Naive thymus-derived CD4-positive, alpha-beta T cell (primary cell): ENCODE measurements at regions of chr6 and their contacts with region 1.

Region 1: GRCh38 chr6:53300656-53301551 is 47.8 kb downstream of the ELOVL5 start:
- DNase-seq: no peak
- ATAC-seq: peak; percentile 48
- H3K4me3 ChIP-seq: no peak overlapping the region
- H3K4me3 Mint-ChIP-seq: peak overlapping the region; percentile 5 to 74 (median 50)
- H3K27ac ChIP-seq: no peak overlapping the region
- H3K27ac Mint-ChIP-seq: peak overlapping the region; percentile 33 to 92 (median 68)
- H3K4me1 ChIP-seq: peaks cover 35 to 52% of the 10 kb centered on the region in 2 donors
- H3K4me1 Mint-ChIP-seq: peaks cover 53 to 84% (median 78%) of the 10 kb centered on the region in 7 donors
- H3K27me3 ChIP-seq: no peaks in the 10 kb centered on the region
- H3K27me3 Mint-ChIP-seq: no peaks in the 10 kb centered on the region

Region 2: GRCh38 chr6:51934098-51934497 is 1366.8 kb before region 1 on chr6:
- CTCF ChIA-PET with region 1: no interaction called
- POLR2A ChIA-PET with region 1: no interaction called
- intact Hi-C with region 1: no loop called
- DNase-seq: no peak
- ATAC-seq: no peak
- H3K4me3 ChIP-seq: no peak overlapping the region
- H3K4me3 Mint-ChIP-seq: no peak overlapping the region
- H3K27ac ChIP-seq: no peak overlapping the region
- H3K27ac Mint-ChIP-seq: no peak overlapping the region
- H3K4me1 ChIP-seq: no peaks in the 10 kb centered on the region
- H3K4me1 Mint-ChIP-seq: no peaks in the 10 kb centered on the region
- H3K27me3 ChIP-seq: no peaks in the 10 kb centered on the region
- H3K27me3 Mint-ChIP-seq: peaks cover 0 to 7% (median 0%) of the 10 kb centered on the region in 5 donors

Region 3: DNA sequence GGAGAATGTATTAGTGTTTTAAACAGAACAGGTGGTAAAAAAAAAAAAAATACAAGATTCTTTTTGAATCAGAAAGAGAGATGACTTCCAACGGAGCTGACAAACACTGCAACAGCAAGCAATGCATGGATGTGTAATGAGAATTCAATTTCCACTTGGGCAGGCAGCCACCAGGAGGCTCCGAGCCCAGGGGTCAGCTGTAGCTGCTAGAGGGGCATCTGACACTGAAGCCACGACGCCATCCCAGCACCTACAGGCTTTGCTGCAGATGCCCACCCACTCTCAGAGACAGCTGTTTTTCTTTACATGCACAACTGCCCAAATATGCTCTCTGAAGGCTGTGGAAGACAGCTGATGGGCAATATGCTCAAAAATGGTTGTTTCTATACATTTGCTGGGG is 27.5 kb before region 1 on chr6:
- CTCF ChIA-PET with region 1: no interaction called
- POLR2A ChIA-PET with region 1: no interaction called
- intact Hi-C with region 1: no loop called
- DNase-seq: no peak
- ATAC-seq: no peak
- H3K4me3 ChIP-seq: no peak overlapping the region
- H3K4me3 Mint-ChIP-seq: no peak overlapping the region
- H3K27ac ChIP-seq: no peak overlapping the region
- H3K27ac Mint-ChIP-seq: peak overlapping the region in 1 of 9 donors; percentile 50
- H3K4me1 ChIP-seq: no peaks in the 10 kb centered on the region
- H3K4me1 Mint-ChIP-seq: peaks cover 0 to 8% (median 4%) of the 10 kb centered on the region in 7 donors
- H3K27me3 ChIP-seq: no peaks in the 10 kb centered on the region
- H3K27me3 Mint-ChIP-seq: no peaks in the 10 kb centered on the region

Region 4: DNA sequence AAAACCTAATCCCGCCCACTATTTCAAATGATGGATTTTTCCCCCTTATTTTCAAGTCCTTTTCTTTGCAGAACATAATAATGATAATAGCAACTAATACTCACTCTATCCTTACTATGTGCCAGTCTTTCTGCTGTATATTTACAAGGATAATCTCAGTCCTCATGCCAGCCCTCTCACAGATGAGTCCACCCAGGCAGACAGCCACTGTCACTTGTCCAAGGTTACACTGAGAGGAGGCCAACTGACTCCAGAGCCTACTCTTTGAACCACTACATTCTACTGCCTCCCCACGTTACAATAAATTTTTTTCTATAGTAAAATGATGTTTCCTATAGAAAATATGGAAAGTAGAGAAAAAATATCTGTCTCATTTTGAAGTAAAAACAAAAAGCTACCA is 17.0 kb after region 1 on chr6:
- CTCF ChIA-PET with region 1: interaction called, 4 read pairs
- POLR2A ChIA-PET with region 1: interaction called, 9 read pairs
- intact Hi-C with region 1: loop called (anchors 2 kb)
- DNase-seq: no peak
- ATAC-seq: no peak
- H3K4me3 ChIP-seq: no peak overlapping the region
- H3K4me3 Mint-ChIP-seq: no peak overlapping the region
- H3K27ac ChIP-seq: no peak overlapping the region
- H3K27ac Mint-ChIP-seq: no peak overlapping the region
- H3K4me1 ChIP-seq: peaks cover 7 to 49% of the 10 kb centered on the region in 2 donors
- H3K4me1 Mint-ChIP-seq: peaks cover 49 to 82% (median 66%) of the 10 kb centered on the region in 7 donors
- H3K27me3 ChIP-seq: no peaks in the 10 kb centered on the region
- H3K27me3 Mint-ChIP-seq: no peaks in the 10 kb centered on the region

Region 5: GRCh38 chr6:53359072-53359842 is 58.4 kb after region 1 on chr6:
- CTCF ChIA-PET with region 1: no interaction called
- POLR2A ChIA-PET with region 1: interaction called, 6 read pairs
- intact Hi-C with region 1: loop called in 1 of 2 experiments (anchors 1 kb)
- DNase-seq: peak; percentile 79 to 96 (median 89)
- ATAC-seq: peak; percentile 91
- H3K4me3 ChIP-seq: peak overlapping the region; percentile 76
- H3K4me3 Mint-ChIP-seq: peak overlapping the region; percentile 78 to 94 (median 90)
- H3K27ac ChIP-seq: peak overlapping the region; percentile 88
- H3K27ac Mint-ChIP-seq: peak overlapping the region; percentile 87 to 99 (median 98)
- H3K4me1 ChIP-seq: peaks cover 33 to 41% of the 10 kb centered on the region in 2 donors
- H3K4me1 Mint-ChIP-seq: peaks cover 24 to 54% (median 43%) of the 10 kb centered on the region in 7 donors
- H3K27me3 ChIP-seq: no peaks in the 10 kb centered on the region
- H3K27me3 Mint-ChIP-seq: peaks cover 0 to 4% (median 0%) of the 10 kb centered on the region in 5 donors